Head of caudate nucleus (tissue), 42 donors: ENCODE measurements at regions of chr11 and their contacts with region 1.

Region 1: DNA sequence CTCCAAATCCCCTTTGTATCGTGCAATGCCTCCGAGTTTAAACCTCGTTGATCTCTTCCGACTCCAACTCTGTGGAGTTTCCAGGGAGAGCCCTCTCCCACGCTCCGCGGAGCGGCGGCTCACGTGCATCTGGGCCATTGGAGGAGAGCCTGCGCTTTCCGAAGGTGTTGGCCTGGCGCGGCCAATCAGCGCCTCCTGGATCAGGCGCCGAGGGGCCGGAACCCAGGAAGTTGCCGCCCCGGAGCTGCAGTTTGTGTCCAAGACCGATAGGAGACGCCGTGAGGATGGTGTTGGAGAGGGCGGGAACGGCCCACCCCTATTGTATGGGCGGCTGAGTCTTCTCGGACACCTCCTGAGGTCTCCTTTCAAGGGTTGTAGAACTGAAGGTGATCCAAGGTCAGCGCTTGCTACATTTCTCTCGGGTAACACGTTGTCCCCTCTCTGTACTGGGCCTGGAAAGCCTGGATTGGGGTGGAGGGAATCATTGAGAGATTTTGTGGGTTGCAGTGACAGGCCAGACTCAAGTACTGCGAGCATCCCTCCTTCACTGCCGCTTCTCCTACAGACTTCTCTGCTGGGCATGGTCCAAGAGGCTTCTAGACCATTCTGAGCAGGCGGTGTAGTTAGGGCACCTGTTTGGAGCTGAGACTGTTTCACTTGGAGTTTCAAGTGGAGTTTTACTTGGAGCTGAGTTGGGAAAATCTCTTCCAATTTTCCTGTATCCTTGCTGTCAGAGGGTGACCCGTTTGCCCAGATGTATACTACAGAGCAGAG is 1.7 kb downstream of the ADAMTS15 start:
- DNase-seq: peak in 23 of 42 donors; percentile 21 to 66 (median 36)

Region 2: DNA sequence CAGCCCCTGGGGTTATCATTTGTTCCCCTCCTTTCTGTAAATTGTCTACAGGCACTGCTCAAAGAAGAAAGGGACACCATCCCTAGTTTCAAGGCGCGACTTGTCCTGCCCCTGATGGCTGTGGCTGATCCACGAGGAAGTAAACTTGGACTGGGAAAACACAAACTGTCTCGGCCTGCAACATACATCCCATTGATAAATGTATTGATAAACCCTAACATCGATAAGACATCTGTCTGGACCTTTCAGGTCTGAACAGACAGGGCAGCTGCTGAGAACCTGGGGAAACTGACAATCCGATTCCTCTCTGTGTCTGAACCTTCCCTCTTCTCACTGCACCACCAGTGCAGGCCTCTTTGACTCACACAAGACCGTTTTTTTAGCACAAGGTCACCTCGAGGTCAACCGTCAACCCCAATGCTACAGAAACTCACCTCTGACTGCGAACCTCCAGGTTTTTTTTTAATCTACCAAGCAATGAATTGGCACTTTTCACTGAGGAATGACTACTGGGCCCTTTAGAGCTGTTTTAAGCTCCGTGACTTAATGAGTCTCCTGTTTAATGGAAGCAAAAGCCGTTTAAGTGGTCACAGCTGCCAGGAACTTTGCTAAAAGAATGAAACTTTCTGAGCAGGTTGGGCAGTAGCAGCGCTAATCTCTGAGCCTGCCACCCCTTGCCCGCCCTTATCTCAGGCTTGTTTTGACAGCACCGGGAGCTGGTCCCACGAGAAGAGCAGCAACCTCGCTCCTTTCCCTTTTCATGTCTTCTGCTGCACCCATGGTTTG is 838.3 kb before region 1 on chr11:
- intact Hi-C with region 1: no loop called
- DNase-seq: no peak

Region 3: DNA sequence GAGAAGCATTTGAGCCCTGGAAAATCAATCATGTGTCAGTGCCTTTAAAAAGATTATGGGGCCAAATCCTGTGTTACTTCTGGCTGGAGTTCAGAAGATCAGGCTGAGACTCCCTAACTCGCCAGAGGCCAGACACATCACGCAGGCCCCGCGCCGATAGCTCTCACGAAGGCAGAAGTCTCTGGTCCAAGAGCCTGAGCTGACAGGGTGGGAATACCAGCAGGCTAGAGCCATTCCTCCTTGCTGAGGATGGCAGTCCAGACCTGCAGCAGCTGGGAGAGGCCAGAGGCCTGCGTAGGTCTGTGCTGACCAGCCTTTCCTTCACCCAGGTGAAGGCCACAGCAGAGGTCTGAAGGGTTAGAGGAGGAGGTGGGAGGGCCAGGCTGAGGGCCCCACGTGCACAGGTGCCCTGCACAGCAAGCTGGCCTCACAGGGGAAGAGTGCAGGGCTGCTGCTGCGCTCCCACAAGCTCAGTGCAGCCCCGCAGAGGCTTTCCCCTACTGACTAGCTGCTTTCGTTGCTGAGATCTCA is 237.7 kb before region 1 on chr11:
- intact Hi-C with region 1: no loop called
- DNase-seq: peak in 25 of 42 donors; percentile 1 to 39 (median 11)

Region 4: GRCh38 chr11:130403271-130403804 is 46.8 kb before region 1 on chr11:
- intact Hi-C with region 1: no loop called
- DNase-seq: peak in 41 of 42 donors; percentile 21 to 85 (median 61)

Region 5: DNA sequence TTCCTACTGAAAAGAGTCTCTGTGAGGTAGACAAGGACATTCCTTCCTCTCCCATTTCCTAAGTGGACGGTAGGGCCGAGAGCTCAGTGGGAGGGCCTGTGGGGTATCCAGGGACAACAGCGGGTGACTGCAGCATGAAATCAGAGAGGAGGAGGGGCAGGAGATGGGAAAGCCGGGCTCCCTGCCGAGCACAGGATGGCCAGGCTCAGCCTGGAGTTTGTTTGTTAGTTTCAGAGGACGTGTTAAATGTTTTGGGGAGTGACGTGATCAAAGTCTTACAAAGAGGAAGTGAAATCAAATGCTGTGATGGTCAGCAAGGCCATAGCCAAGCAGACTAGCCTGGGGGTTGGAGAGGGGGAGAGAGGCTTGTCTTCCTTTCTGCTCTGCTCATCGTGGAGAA is 151.0 kb after region 1 on chr11:
- intact Hi-C with region 1: loop called (anchors 10 kb)
- DNase-seq: peak in 7 of 42 donors; percentile 15 to 40 (median 27)

Region 6: DNA sequence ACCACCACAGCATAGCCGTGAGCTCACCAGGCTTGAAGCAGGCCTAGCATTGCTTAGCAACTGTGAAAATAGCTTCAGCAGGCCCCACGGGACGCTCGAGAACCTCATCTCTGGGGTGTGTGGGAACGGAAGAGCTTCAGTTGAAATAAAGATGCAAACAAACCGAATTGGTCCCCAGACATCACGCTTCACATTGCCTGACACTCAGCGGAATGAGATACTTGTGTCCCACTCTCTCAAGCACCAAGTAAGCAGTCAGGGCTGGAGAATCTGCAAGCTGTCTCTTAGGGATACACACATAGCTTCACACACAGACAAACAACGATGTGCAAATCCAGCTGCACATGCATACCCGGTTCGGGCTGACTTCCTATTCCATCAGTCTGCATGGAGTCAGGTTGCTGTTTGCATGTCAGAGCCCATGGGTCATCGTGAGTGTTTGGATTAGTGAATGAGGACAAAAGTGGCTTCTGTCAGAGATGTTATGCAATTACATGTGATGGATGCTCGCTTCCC is 260.4 kb after region 1 on chr11:
- intact Hi-C with region 1: no loop called
- DNase-seq: no peak